ENCODE measurements at regions of chr14 and their contacts with region 1.

Region 1: GRCh38 chr14:57268161-57269069 is at the starts of genes AP5M1 and EXOC5:
- DNase-seq: peak; percentile 96
- total RNA-seq, gene AP5M1: 49.6 TPM
- total RNA-seq, gene EXOC5: 60.9 TPM

Region 2: GRCh38 chr14:57390028-57390805 is 121.8 kb after region 1 on chr14 and contains the start of gene NAA30:
- intact Hi-C with region 1: loop called (anchors 2 kb)
- DNase-seq: peak; percentile 96
- total RNA-seq, gene NAA30: 21.8 TPM